HEK293T (cell line): ENCODE measurements at regions of chr5 and their contacts with region 1.

Region 1: DNA sequence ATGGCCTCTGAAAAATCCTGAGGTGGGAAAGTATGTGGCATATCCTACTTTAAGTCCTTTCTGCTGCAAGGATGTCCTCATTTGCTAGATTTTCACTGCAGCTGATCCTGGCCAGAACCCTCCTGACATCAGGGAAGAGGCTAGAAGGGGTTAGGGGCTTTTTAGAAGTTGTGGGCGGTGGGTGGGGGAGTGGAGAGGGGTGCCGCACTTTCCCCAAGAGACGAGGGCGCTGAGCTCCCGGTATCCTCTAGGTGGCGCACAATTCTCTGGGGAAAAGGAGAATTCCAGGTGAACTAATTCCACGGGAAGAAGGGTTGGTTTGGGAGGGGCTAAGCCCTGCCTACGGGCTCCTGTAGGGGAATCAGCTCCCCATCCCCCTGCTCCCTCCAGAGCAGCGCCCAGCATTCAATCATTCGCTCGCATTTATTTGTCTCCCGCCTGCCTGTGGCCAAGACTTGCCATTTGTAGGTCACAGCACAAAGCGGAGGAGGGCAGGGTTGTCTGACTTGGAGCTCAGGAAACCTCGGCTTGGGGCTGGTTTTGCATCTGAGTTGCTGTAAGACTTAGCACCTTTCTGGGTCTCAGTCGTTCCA is 42.9 kb upstream of the HAND1 start:
- DNase-seq: peak; percentile 69

Region 2: GRCh38 chr5:154467655-154468354 is 53.2 kb before region 1 on chr5:
- CTCF ChIA-PET with region 1: interaction called, 13 read pairs
- POLR2A ChIA-PET with region 1: no interaction called
- DNase-seq: peak; percentile 88

Region 3: GRCh38 chr5:154482528-154483449 is 38.2 kb before region 1 on chr5:
- CTCF ChIA-PET with region 1: interaction called, 16 read pairs
- POLR2A ChIA-PET with region 1: interaction called, 5 read pairs
- DNase-seq: peak; percentile 68

Region 4: DNA sequence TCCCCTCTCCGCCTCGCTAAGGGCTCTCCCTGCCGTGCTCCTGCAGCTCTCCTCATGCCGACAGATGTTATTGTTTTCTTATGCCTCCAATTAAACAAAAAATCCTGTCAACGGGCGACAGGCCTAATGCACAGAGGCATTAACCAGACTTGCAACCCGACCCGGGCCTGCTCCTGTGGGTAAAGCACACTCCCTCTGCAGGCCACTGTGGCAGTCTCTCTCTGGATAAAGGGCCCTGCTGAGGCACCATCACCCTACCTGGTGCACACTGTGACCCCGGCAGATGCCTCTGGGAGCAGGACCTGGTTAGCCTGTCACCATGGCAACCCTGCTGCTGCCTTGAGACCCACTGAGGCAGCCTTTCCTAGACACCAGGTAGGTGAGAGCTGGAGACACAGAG is 15.3 kb before region 1 on chr5:
- CTCF ChIA-PET with region 1: interaction called, 26 read pairs
- POLR2A ChIA-PET with region 1: no interaction called
- DNase-seq: peak; percentile 55

Region 5: DNA sequence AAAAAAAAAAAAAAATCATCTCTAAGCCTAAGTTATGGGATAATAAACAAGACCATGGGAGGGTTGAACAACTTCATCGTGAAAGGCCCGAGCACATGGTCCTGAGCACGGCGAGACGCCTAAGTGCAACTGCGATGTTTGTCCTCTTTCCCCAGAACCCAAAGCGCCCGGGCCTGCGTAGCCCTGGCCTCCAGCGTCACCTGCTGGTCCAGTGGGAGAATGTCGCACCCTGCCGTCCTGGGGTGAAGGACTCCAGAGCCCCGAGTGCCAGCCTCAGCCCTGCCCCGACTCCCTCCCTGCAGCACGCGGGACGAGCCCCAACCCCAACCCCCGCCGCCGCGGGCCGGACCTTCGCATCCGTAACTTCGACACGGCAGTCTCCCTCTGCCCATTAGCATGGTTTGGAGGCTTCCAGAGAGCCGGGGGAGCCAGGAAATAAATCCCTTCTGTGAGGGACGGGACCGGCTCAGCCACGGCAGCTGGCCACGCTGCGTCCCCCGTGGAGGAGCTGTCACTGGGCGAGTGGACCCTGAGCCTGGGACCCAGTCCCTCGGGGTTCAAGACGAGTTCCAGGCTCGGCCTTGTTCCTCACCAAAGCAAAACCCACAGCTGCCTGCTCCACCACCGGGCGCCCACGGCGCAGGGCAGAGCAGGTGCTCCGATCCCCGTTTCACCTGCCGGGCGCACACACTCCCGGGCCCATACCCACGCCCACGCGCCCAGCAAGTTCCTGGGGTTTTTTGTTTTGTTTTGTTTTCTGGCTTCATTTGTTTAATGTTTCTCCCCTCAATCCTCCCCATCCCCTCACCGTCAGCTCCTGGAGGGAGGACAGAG is 89.6 kb after region 1 on chr5:
- CTCF ChIA-PET with region 1: interaction called, 11 read pairs
- POLR2A ChIA-PET with region 1: no interaction called
- DNase-seq: peak; percentile 89

Region 6: DNA sequence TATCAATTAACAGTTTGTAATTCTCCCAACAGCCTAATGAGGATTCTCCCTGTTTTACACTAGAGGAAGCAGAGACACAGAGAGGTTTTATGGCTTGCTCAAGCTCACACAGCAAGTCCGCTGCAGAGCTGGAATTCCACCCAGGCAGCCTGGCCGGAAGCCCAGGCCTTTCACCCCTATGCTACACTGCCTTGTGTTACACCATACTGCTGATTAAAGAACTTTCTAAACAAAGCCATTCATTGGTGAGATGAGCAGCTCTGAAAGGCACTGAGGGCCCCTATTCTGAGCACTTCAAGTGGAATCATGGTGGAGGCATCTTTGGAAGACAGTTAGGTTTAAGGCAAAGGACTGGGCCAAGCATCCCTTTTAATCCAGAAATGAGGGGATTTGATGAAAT is 219.5 kb after region 1 on chr5:
- CTCF ChIA-PET with region 1: no interaction called
- POLR2A ChIA-PET with region 1: no interaction called
- DNase-seq: no peak